ENCODE measurements at regions of chr10 and their contacts with region 1.

Region 1: GRCh38 chr10:6401562-6402348 is 178.3 kb downstream of the PRKCQ start:
- DNase-seq: peak in 8 of 9 experiments; percentile 40 to 83 (median 62)
- ATAC-seq: peak; percentile 92
- H3K4me3 ChIP-seq: no peak overlapping the region
- H3K4me3 Mint-ChIP-seq: no peak overlapping the region
- H3K27ac ChIP-seq: no peak overlapping the region
- H3K27ac Mint-ChIP-seq: no peak overlapping the region
- H3K4me1 ChIP-seq: peaks cover 6% of the 10 kb centered on the region
- H3K4me1 Mint-ChIP-seq: peaks cover 16% of the 10 kb centered on the region
- H3K27me3 ChIP-seq: peaks cover 0 to 2% of the 10 kb centered on the region in 2 experiments
- H3K27me3 Mint-ChIP-seq: no peaks in the 10 kb centered on the region
- CTCF ChIP-seq: peak; percentile 70

Region 2: GRCh38 chr10:5889624-5890451 is 511.9 kb before region 1 on chr10 and contains the starts of genes ANKRD16 and FBH1:
- CTCF ChIA-PET with region 1: no interaction called
- POLR2A ChIA-PET with region 1: no interaction called
- intact Hi-C with region 1: loop called in 1 of 2 experiments (anchors 10 kb)
- DNase-seq: peak; percentile 93 to 99 (median 97)
- ATAC-seq: peak; percentile 89
- H3K4me3 ChIP-seq: peak within 1 kb of the TSS; percentile 79 to 88
- H3K4me3 Mint-ChIP-seq: peak within 1 kb of the TSS; percentile 90
- H3K27ac ChIP-seq: peak within 1 kb of the TSS; percentile 47 to 63
- H3K27ac Mint-ChIP-seq: peak within 1 kb of the TSS; percentile 81
- H3K4me1 ChIP-seq: peaks cover 19% of the 10 kb centered on the region
- H3K4me1 Mint-ChIP-seq: peaks cover 50% of the 10 kb centered on the region
- H3K27me3 ChIP-seq: no peaks in the 10 kb centered on the region
- H3K27me3 Mint-ChIP-seq: no peaks in the 10 kb centered on the region
- CTCF ChIP-seq: no peak
- total RNA-seq, gene ANKRD16: 1.7 to 2.1 TPM
- total RNA-seq, gene FBH1: 23.5 to 24.8 TPM

Region 3: GRCh38 chr10:6108603-6109443 is 292.9 kb before region 1 on chr10:
- CTCF ChIA-PET with region 1: interaction called, 140 read pairs
- POLR2A ChIA-PET with region 1: interaction called, 3 read pairs
- intact Hi-C with region 1: loop called (anchors 1 kb)
- DNase-seq: peak in 5 of 9 experiments; percentile 15 to 77 (median 44)
- ATAC-seq: peak; percentile 85
- H3K4me3 ChIP-seq: no peak overlapping the region
- H3K4me3 Mint-ChIP-seq: peak overlapping the region; percentile 53
- H3K27ac ChIP-seq: no peak overlapping the region
- H3K27ac Mint-ChIP-seq: peak overlapping the region; percentile 62
- H3K4me1 ChIP-seq: peaks cover 8% of the 10 kb centered on the region
- H3K4me1 Mint-ChIP-seq: peaks cover 29% of the 10 kb centered on the region
- H3K27me3 ChIP-seq: no peaks in the 10 kb centered on the region
- H3K27me3 Mint-ChIP-seq: no peaks in the 10 kb centered on the region
- CTCF ChIP-seq: peak; percentile 86

Region 4: DNA sequence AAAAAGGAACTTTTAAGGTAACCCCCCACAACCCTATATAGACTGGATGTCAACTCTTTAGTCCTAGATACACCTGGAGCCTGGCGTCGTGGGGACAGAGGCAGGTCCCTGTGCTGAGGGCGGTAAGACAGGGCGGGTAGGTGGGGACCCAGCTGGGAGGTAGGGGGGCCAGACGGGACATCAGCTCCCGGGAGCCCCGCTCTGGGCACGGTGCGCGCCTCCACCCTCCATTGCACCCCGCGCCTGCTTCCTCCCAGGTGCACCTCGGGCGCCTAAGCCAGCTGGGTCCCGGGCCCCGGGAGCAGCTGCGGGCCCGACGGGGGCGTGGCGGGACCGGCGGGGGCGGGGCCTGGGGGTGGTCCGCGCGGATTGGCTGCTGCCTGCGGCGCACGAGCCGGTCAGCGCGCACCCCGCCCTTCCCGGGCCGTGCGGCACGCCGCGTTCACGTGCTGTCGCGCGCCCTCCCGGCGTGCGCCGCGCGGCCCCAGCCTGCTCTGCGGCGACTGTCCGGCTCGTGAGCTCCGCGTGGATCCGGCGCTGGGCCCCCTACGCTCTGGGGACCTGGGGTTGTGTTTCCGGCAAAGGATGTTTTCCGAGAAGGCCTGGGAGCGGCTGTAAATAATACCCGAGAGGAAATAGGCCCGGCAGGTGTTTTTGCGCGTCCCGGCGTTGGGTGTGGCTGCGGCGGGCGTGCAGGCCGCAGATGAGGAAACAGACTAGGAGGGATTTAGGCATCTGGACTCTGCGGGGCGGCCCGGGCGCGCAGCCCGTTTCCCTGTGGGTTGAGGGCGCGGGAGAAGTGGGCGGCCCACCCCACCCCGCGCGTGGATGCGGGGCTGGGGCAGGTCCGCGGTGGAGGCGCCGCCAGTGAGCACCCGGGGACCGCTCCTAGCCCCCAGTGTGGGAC is 238.1 kb before region 1 on chr10:
- CTCF ChIA-PET with region 1: interaction called, 13 read pairs
- POLR2A ChIA-PET with region 1: interaction called, 4 read pairs
- intact Hi-C with region 1: no loop called
- DNase-seq: peak; percentile 80 to 97 (median 92)
- ATAC-seq: peak; percentile 91
- H3K4me3 ChIP-seq: peak overlapping the region; percentile 76 to 81
- H3K4me3 Mint-ChIP-seq: peak overlapping the region; percentile 92
- H3K27ac ChIP-seq: peak overlapping the region; percentile 86 to 90
- H3K27ac Mint-ChIP-seq: peak overlapping the region; percentile 98
- H3K4me1 ChIP-seq: peaks cover 31% of the 10 kb centered on the region
- H3K4me1 Mint-ChIP-seq: peaks cover 54% of the 10 kb centered on the region
- H3K27me3 ChIP-seq: no peaks in the 10 kb centered on the region
- H3K27me3 Mint-ChIP-seq: no peaks in the 10 kb centered on the region
- CTCF ChIP-seq: no peak

Region 5: DNA sequence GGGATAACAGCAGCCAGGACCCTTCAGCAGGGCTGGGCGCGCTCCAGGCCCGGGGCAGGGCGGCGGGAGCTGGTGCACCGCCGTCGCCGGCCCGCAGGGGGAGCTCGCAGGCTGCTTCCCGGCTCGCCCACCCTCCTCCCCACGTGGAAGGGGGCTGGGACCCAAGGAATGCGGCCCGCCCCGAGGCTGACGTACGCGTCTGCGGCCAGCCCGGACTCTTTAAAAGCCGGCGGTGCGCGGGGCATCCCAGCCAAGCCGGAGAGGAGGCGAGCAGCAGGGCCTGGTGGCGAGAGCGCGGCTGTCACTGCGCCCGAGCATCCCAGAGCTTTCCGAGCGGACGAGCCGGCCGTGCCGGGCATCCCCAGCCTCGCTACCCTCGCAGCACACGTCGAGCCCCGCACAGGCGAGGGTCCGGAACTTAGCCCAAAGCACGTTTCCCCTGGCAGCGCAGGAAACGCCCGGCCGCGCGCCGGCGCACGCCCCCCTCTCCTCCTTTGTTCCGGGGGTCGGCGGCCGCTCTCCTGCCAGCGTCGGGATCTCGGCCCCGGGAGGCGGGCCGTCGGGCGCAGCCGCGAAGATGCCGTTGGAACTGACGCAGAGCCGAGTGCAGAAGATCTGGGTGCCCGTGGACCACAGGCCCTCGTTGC is 198.9 kb before region 1 on chr10 and contains the start of gene PFKFB3:
- CTCF ChIA-PET with region 1: interaction called, 144 read pairs
- POLR2A ChIA-PET with region 1: interaction called, 49 read pairs
- intact Hi-C with region 1: loop called (anchors 1 kb)
- DNase-seq: peak; percentile 76 to 96 (median 91)
- ATAC-seq: peak; percentile 62
- H3K4me3 ChIP-seq: peak within 1 kb of the TSS; percentile 54 to 61
- H3K4me3 Mint-ChIP-seq: peak within 1 kb of the TSS; percentile 99
- H3K27ac ChIP-seq: peak within 1 kb of the TSS; percentile 29 to 68
- H3K27ac Mint-ChIP-seq: peak within 1 kb of the TSS; percentile 94
- H3K4me1 ChIP-seq: peaks cover 18% of the 10 kb centered on the region
- H3K4me1 Mint-ChIP-seq: peaks cover 26% of the 10 kb centered on the region
- H3K27me3 ChIP-seq: no peaks in the 10 kb centered on the region
- H3K27me3 Mint-ChIP-seq: no peaks in the 10 kb centered on the region
- CTCF ChIP-seq: peak; percentile 94
- total RNA-seq, gene PFKFB3: 221 to 233 TPM

Region 6: GRCh38 chr10:6348096-6348874 is 53.5 kb before region 1 on chr10:
- CTCF ChIA-PET with region 1: interaction called, 55 read pairs
- POLR2A ChIA-PET with region 1: interaction called, 31 read pairs
- intact Hi-C with region 1: loop called in 1 of 2 experiments (anchors 1 kb)
- DNase-seq: peak; percentile 59 to 96 (median 81)
- ATAC-seq: peak; percentile 89
- H3K4me3 ChIP-seq: peak overlapping the region; percentile 30 to 39
- H3K4me3 Mint-ChIP-seq: peak overlapping the region; percentile 81
- H3K27ac ChIP-seq: peak overlapping the region; percentile 71 to 79
- H3K27ac Mint-ChIP-seq: peak overlapping the region; percentile 97
- H3K4me1 ChIP-seq: peaks cover 34% of the 10 kb centered on the region
- H3K4me1 Mint-ChIP-seq: peaks cover 61% of the 10 kb centered on the region
- H3K27me3 ChIP-seq: no peaks in the 10 kb centered on the region
- H3K27me3 Mint-ChIP-seq: no peaks in the 10 kb centered on the region
- CTCF ChIP-seq: no peak

Region 7: GRCh38 chr10:6390213-6390845 is 11.4 kb before region 1 on chr10:
- CTCF ChIA-PET with region 1: interaction called, 32 read pairs
- POLR2A ChIA-PET with region 1: interaction called, 5 read pairs
- intact Hi-C with region 1: no loop called
- DNase-seq: no peak
- ATAC-seq: no peak
- H3K4me3 ChIP-seq: no peak overlapping the region
- H3K4me3 Mint-ChIP-seq: no peak overlapping the region
- H3K27ac ChIP-seq: no peak overlapping the region
- H3K27ac Mint-ChIP-seq: no peak overlapping the region
- H3K4me1 ChIP-seq: no peaks in the 10 kb centered on the region
- H3K4me1 Mint-ChIP-seq: no peaks in the 10 kb centered on the region
- H3K27me3 ChIP-seq: no peaks in the 10 kb centered on the region
- H3K27me3 Mint-ChIP-seq: no peaks in the 10 kb centered on the region
- CTCF ChIP-seq: no peak

Region 8: GRCh38 chr10:6498771-6499170 is 97.0 kb after region 1 on chr10:
- CTCF ChIA-PET with region 1: no interaction called
- POLR2A ChIA-PET with region 1: no interaction called
- intact Hi-C with region 1: no loop called
- DNase-seq: peak in 7 of 9 experiments; percentile 42 to 89 (median 52)
- ATAC-seq: peak; percentile 72
- H3K4me3 ChIP-seq: no peak overlapping the region
- H3K4me3 Mint-ChIP-seq: peak overlapping the region; percentile 55
- H3K27ac ChIP-seq: peak overlapping the region; percentile 0 to 87
- H3K27ac Mint-ChIP-seq: peak overlapping the region; percentile 94
- H3K4me1 ChIP-seq: peaks cover 36% of the 10 kb centered on the region
- H3K4me1 Mint-ChIP-seq: peaks cover 31% of the 10 kb centered on the region
- H3K27me3 ChIP-seq: no peaks in the 10 kb centered on the region
- H3K27me3 Mint-ChIP-seq: no peaks in the 10 kb centered on the region
- CTCF ChIP-seq: no peak

Region 9: GRCh38 chr10:6558272-6558671 is 156.5 kb after region 1 on chr10:
- CTCF ChIA-PET with region 1: no interaction called
- POLR2A ChIA-PET with region 1: no interaction called
- intact Hi-C with region 1: no loop called
- DNase-seq: peak in 2 of 9 experiments; percentile 63 to 79
- ATAC-seq: peak; percentile 65
- H3K4me3 ChIP-seq: no peak overlapping the region
- H3K4me3 Mint-ChIP-seq: peak overlapping the region; percentile 70
- H3K27ac ChIP-seq: peak overlapping the region; percentile 10 to 76
- H3K27ac Mint-ChIP-seq: peak overlapping the region; percentile 95
- H3K4me1 ChIP-seq: peaks cover 70% of the 10 kb centered on the region
- H3K4me1 Mint-ChIP-seq: peaks cover 88% of the 10 kb centered on the region
- H3K27me3 ChIP-seq: no peaks in the 10 kb centered on the region
- H3K27me3 Mint-ChIP-seq: no peaks in the 10 kb centered on the region
- CTCF ChIP-seq: no peak

Region 10: DNA sequence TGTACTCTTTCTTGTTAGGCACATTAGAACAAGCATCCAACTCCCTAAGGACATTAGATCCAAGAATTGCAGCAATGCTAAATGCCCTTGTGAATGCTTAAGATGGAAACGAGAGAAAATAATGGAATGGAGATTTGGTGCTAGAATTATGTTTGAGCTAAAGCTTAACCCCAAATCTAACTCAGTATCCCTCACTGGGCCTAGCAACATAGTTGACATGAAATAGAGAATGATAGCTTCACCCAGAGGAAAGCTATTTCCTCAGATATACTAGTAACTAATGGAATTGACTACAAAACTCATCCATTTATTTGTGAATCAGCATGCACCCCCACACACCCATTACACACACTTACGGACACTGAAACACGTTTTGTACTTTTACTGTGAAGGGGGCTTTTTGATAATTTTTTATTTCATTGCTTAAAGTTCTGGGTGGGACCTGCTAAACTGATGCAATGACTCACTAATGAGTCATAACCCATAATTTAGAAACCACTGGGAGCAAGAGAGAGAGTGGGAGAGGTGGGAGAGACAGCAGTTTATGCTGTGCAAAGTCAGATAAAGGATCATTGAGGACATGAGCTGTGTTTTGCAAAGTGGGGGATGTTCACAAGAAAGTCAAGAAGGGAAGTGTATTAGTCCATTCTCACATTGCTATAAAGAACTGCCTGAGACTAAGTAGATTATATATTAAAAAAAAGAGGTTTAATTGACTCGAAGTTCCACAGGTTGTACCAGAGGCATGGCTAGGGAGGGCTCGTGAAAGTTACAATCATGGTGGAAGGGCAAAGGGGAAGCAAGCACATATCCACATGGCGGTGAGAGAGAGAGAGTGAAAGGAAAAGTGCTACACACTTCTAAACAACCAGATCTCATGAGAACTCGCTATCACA is 626.4 kb after region 1 on chr10:
- CTCF ChIA-PET with region 1: no interaction called
- POLR2A ChIA-PET with region 1: no interaction called
- intact Hi-C with region 1: no loop called
- DNase-seq: peak in 2 of 9 experiments; percentile 38 to 61
- ATAC-seq: peak; percentile 39
- H3K4me3 ChIP-seq: no peak overlapping the region
- H3K4me3 Mint-ChIP-seq: peak overlapping the region; percentile 8
- H3K27ac ChIP-seq: peak overlapping the region in 1 of 2 experiments; percentile 75
- H3K27ac Mint-ChIP-seq: peak overlapping the region; percentile 21
- H3K4me1 ChIP-seq: peaks cover 18% of the 10 kb centered on the region
- H3K4me1 Mint-ChIP-seq: peaks cover 36% of the 10 kb centered on the region
- H3K27me3 ChIP-seq: no peaks in the 10 kb centered on the region
- H3K27me3 Mint-ChIP-seq: no peaks in the 10 kb centered on the region
- CTCF ChIP-seq: no peak

Region 11: DNA sequence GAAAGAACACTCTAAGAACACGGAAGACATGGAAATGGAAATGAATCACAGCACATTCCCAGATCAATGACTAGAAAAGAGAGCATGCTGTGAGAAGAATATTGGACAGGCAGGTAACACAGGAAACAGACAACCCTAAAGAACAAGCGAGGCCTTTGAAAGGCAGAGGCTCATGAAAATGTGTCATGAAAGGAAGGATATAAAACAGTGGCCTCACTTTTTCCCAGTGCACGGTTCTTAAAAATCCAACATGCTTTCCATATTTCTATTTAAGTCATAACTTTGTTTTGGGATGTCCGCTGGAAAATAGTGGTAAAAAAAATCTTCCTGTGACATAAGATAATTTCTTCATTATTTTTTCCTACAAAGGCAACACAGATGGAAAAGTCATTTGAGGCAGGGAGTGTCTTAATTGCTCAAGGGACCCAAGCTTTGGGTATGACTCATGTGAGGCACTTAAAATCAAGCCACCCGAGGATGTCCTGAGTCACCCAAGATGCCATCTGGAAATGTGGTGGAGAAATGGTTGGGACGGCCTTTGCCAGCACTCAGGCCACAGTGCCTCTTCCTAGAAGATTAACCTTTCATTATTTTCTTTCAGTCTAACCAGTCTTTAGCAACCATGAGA is 1248.0 kb after region 1 on chr10:
- CTCF ChIA-PET with region 1: no interaction called
- POLR2A ChIA-PET with region 1: no interaction called
- intact Hi-C with region 1: no loop called
- DNase-seq: no peak
- ATAC-seq: no peak
- H3K4me3 ChIP-seq: no peak overlapping the region
- H3K4me3 Mint-ChIP-seq: no peak overlapping the region
- H3K27ac ChIP-seq: no peak overlapping the region
- H3K27ac Mint-ChIP-seq: no peak overlapping the region
- H3K4me1 ChIP-seq: no peaks in the 10 kb centered on the region
- H3K4me1 Mint-ChIP-seq: no peaks in the 10 kb centered on the region
- H3K27me3 ChIP-seq: peaks cover 0 to 2% of the 10 kb centered on the region in 2 experiments
- H3K27me3 Mint-ChIP-seq: peaks cover 10% of the 10 kb centered on the region
- CTCF ChIP-seq: no peak

Measured in CD8-positive, alpha-beta T cell (primary cell).